ENCODE measurements at regions of chr20 and their contacts with region 1.

Region 1: DNA sequence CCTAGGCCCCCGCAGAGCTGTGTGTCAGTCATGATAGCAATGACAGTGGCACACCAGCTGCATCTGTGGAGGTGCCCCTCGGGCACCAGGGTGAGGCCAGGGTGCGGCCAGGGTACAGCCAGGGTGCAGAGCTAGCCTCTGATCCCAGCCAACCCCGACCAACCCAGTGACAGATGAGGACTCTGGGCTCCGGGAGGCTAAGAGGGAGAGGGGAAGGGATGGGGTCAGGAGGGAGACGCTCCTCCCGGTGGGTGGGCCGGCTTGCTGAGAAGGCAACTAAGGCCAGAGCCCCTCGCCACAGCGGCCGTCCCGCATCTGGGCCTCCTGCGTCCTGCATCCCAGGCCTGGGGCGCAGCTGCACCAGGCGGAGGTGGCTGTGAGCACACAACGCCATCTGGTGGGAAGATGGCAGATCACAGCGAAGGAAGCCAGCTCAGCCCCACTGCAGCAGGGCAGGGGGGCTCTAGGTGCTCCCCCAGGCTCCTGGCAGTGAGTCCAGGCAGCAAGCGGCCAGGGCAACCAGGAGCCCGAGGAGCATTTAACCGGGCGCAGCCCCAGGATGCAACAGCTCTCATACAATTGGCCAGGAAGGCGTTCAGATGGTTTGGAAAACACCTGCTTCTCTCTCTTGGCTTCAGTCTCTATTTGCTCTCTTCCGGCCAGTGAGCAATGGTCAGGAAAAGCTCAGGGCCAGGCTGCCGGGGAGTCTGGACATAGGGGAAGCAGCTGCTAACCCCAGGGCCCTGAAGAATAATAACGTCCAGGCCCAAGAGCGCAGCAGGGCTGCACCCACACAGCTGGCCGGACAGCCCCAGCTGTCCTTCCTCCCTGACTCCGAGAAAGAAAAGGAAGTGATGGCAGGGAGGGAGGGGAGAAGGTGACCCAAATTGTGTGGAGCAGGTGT is 169.4 kb downstream of the TAF4 start:
- DNase-seq: no peak
- H3K4me3 ChIP-seq: no peak overlapping the region
- H3K27ac ChIP-seq: no peak overlapping the region
- H3K4me1 ChIP-seq: no peaks in the 10 kb centered on the region
- H3K27me3 ChIP-seq: peaks cover 0 to 42% (median under 1%) of the 10 kb centered on the region in 3 donors
- CTCF ChIP-seq: peak in 3 of 4 experiments; percentile 39 to 73 (median 73)
- EP300 ChIP-seq: no peak
- POLR2A ChIP-seq: no peak

Region 2: DNA sequence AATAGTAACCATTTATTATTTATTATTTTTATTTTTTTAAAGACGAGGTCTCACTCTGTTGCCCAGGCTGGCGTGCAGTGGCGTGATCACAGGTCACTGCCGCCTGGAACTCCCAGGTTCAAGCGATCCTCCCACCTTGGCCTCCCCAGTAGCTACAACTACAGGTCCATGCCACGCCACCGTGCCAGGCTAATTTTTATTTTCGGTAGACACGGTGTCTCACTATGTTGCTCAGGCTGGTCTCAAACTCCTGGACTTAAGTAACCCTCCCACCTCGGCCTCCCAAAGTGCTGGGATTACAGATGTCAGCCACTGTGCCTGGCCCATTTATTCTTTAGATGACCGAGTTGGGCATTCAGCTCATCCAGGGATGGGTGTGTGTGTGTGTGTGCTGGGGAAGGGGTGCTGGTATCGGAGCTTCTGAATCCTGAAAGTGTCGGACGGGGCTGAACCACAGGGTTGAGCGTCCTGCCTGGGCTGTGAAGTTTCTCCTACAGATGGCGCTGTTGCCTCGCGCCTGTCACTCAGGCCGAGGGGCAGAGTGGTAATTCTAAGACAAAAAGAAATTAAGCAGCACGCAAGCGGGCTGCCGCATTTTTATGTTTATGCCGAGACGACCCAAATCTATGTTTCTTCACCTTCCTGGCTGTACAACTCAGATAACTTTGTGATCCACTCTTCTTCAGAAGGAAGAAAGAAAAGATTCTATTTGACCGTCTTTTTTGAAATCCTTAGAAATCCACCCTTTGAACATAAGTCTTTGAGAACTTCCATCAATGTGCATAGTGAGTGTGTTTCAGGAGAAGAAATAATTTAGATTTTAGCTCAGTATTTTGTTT is 1685.3 kb before region 1 on chr20:
- intact Hi-C with region 1: loop called (anchors 5 kb)
- DNase-seq: no peak
- H3K4me3 ChIP-seq: no peak overlapping the region
- H3K27ac ChIP-seq: no peak overlapping the region
- H3K4me1 ChIP-seq: no peaks in the 10 kb centered on the region
- H3K27me3 ChIP-seq: peaks cover 0 to 17% (median 4%) of the 10 kb centered on the region in 3 donors
- CTCF ChIP-seq: peak in 3 of 4 experiments; percentile 52 to 68 (median 56)
- EP300 ChIP-seq: no peak
- POLR2A ChIP-seq: no peak

Region 3: DNA sequence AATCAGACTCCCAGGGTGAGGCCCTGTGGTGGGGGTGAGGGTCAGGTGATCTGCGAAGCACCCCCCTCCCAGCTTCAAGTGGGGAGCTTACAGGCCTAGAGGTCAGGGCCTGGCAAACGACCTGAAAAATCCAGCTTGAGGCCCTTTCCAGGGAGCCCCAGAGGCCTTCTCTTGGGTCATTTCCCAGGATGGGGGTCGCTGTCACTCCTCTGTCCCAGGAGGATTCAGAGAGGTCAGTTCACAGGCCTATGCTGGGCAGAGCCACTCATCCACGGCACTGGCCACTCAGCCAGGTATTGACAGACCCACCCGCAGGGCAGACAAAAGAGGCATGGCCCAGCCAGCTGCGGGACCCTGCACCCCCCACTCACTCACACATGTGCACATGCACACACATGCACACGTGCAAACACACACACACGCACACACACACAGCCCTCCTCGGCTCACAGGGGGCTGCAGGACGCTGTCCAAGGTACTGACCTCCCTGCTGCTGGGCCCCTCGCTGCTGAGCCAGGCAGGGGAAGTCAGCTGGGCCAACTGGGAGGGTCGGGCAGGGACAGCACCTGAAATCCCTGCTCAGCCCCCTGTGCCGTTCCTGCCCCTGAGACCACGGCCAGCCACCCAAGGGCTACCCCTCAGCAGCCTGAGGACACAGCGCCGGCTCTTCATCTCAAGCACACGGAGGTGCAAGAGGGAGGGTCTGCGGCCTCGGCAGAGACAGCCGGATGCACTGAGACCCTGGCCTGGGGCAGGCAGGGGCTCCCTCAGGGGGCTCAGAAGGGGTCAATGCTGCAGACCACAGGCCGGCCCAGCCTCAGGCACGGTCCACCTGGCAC is 55.6 kb after region 1 on chr20:
- intact Hi-C with region 1: no loop called
- DNase-seq: peak; percentile 46
- H3K4me3 ChIP-seq: no peak overlapping the region
- H3K27ac ChIP-seq: no peak overlapping the region
- H3K4me1 ChIP-seq: no peaks in the 10 kb centered on the region
- H3K27me3 ChIP-seq: peaks cover 5 to 12% (median 10%) of the 10 kb centered on the region in 3 donors
- CTCF ChIP-seq: no peak
- EP300 ChIP-seq: no peak
- POLR2A ChIP-seq: no peak